ENCODE measurements at regions of chr2 and their contacts with region 1.

Region 1: GRCh38 chr2:32559136-32559535 is 68.7 kb upstream of the TTC27 start:
- DNase-seq: no peak
- ATAC-seq: no peak
- H3K4me3 ChIP-seq: no peak overlapping the region
- H3K27ac ChIP-seq: no peak overlapping the region
- H3K4me1 ChIP-seq: no peaks in the 10 kb centered on the region
- H3K27me3 ChIP-seq: no peaks in the 10 kb centered on the region

Region 2: DNA sequence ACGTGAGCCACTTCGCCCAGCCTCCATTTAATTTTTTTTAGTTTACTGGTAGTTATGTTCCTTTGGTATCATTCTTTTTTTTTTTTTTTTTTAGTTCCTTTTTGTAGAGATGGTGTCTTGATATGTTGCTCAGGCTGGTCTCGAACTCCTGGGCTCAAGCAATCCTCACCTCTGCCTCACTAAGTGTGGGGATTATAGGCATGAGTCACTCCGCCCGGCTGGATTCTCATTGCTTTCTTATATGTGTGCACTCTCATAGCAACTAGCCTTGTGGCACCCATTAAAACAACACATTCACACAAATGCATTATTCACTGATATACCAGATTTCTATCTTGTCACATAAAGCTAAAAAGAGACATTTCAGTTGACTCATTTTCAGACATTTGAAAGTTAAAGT is 73.0 kb after region 1 on chr2:
- intact Hi-C with region 1: no loop called
- DNase-seq: no peak
- ATAC-seq: no peak
- H3K4me3 ChIP-seq: no peak overlapping the region
- H3K27ac ChIP-seq: no peak overlapping the region
- H3K4me1 ChIP-seq: peaks cover 0 to 3% of the 10 kb centered on the region in 2 donors
- H3K27me3 ChIP-seq: no peaks in the 10 kb centered on the region

Region 3: DNA sequence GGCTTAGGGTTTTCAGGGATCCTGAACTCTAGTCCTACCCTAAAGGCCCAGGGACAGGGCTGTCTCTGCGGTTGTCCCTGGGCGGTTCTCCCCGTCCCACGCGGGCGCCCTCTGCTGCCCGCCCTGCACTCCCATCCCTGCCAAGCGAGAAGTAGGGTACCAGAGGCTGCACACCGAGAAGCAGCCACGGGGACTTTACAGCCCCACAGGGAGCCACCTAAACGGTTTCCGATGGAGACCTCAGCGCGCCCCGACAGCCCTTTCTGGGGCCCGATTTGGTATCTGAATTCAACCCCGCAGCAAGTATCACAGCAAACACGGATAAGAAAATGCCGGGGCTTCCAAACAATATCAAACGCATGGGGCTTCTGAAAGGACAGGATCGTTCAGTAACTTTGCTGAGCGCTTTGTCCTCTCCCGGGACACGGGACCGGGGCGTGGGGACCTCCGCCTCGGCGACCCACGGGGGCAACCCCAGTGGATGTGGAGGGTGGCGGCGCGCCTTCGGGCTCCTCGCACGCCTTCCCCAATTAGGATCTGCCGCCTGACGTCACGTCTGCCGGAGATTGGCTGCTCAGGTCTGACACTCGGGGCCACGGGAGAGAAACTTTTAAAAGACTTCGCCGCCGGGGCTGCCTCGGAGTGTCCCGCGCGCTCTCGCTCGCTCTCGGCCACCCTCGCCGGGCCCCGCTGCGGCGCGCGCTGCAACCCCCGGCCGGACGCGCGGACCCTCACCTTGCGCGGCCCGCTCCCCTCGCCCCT is 387.4 kb after region 1 on chr2 and contains the start of gene LTBP1:
- intact Hi-C with region 1: loop called in 1 of 2 experiments (anchors 5 kb)
- DNase-seq: peak; percentile 81 to 92
- ATAC-seq: peak; percentile 88
- H3K4me3 ChIP-seq: peak within 1 kb of the TSS; percentile 84 to 96
- H3K27ac ChIP-seq: peak within 1 kb of the TSS; percentile 30 to 36
- H3K4me1 ChIP-seq: no peaks in the 10 kb centered on the region
- H3K27me3 ChIP-seq: no peaks in the 10 kb centered on the region
- total RNA-seq, gene LTBP1: 551 to 573 TPM

Measured in aorta (tissue), 5 donors.